Mammary epithelial cell (primary cell): ENCODE measurements at regions of chr7 and their contacts with region 1.

Region 1: GRCh38 chr7:15305002-15305600 is 256.7 kb downstream of the AGMO start:
- DNase-seq: peak; percentile 33
- H3K4me3 ChIP-seq: no peak overlapping the region
- H3K27ac ChIP-seq: no peak overlapping the region
- H3K4me1 ChIP-seq: no peaks in the 10 kb centered on the region
- H3K27me3 ChIP-seq: no peaks in the 10 kb centered on the region
- CTCF ChIP-seq: peak; percentile 72 to 79

Region 2: DNA sequence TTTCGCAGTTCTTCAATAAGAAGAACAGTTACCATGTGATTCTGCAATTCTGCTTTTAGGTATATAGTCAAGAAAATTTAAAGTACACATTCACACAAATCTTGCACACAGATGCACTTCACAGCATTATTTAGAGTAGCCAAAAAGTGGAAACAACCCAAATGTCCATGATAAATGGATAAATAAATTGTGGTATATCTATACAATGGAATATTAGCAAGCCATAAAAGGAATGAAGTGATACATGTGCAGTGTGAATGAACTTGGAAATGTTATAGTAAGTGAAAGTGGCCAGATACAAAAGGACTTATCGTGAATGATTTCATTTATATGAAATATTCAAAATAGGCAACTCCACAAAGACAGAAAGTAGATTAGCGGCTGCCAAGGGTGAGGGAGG is 147.6 kb after region 1 on chr7:
- CTCF ChIA-PET with region 1: no interaction called
- dilution Hi-C with region 1: no loop called
- in situ Hi-C with region 1: no loop called
- intact Hi-C with region 1: no loop called
- DNase-seq: no peak
- H3K4me3 ChIP-seq: no peak overlapping the region
- H3K27ac ChIP-seq: no peak overlapping the region
- H3K4me1 ChIP-seq: no peaks in the 10 kb centered on the region
- H3K27me3 ChIP-seq: no peaks in the 10 kb centered on the region
- CTCF ChIP-seq: no peak

Region 3: DNA sequence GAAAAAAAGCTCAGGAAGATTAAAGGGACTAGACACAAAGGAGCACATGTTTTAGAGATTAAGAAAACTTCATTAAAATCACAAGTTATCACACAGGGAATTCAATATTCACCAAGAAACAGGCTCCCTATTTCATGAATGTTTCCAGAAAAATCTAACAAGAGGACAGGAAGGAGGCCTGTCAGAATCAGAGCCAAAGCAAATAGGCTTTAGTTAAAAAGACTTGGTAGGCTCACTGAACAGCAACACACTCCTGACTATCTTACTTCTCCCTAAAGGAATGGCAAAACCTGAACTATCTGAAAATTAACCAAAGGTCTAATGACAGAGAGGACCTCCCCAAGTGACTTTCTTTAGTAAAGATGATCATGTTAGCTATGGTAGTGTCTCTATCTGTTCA is 569.7 kb after region 1 on chr7:
- CTCF ChIA-PET with region 1: no interaction called
- dilution Hi-C with region 1: no loop called
- in situ Hi-C with region 1: no loop called
- intact Hi-C with region 1: no loop called
- DNase-seq: no peak
- H3K4me3 ChIP-seq: no peak overlapping the region
- H3K27ac ChIP-seq: no peak overlapping the region
- H3K4me1 ChIP-seq: no peaks in the 10 kb centered on the region
- H3K27me3 ChIP-seq: no peaks in the 10 kb centered on the region
- CTCF ChIP-seq: no peak

Region 4: GRCh38 chr7:16062269-16062668 is 757.2 kb after region 1 on chr7:
- CTCF ChIA-PET with region 1: no interaction called
- dilution Hi-C with region 1: no loop called
- in situ Hi-C with region 1: loop called (anchors 10 to 25 kb)
- intact Hi-C with region 1: no loop called
- DNase-seq: peak; percentile 64
- H3K4me3 ChIP-seq: no peak overlapping the region
- H3K27ac ChIP-seq: no peak overlapping the region
- H3K4me1 ChIP-seq: no peaks in the 10 kb centered on the region
- H3K27me3 ChIP-seq: no peaks in the 10 kb centered on the region
- CTCF ChIP-seq: no peak